Activated naive CD4-positive, alpha-beta T cell treated with anti-CD3 and anti-CD28 coated beads for 36 hours (primary cell): ENCODE measurements at regions of chr7 and their contacts with region 1.

Region 1: GRCh38 chr7:37916673-37917660 is at the start of gene SFRP4:
- DNase-seq: peak; percentile 17
- H3K4me3 Mint-ChIP-seq: peak within 1 kb of the TSS; percentile 22
- H3K27ac Mint-ChIP-seq: no peak within 1 kb of the TSS
- H3K4me1 Mint-ChIP-seq: peaks cover 14% of the 10 kb centered on the region
- H3K27me3 Mint-ChIP-seq: peaks cover 58% of the 10 kb centered on the region
- total RNA-seq, gene SFRP4: not detected

Region 2: DNA sequence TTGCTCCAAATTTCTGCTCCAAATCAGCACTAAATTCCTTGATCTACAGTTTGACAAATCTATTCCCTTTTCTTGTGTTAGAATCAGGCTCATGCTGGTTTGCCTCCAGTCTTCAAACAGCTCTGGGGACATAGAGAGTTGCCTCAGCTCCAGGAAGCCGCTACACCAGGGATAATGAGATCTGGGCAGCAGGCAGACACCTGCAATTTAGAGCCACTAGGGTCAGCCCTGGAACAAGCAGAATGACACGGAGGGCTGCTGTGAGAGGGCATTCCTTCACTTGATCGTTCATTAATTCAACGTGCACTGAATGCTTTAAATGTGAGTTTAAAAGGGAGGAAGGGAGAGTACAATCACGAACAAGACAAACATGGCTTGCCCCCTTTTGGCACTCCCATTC is 464.6 kb before region 1 on chr7:
- CTCF ChIA-PET with region 1: no interaction called
- intact Hi-C with region 1: no loop called
- DNase-seq: no peak
- H3K4me3 Mint-ChIP-seq: no peak overlapping the region
- H3K27ac Mint-ChIP-seq: no peak overlapping the region
- H3K4me1 Mint-ChIP-seq: peaks cover 14% of the 10 kb centered on the region
- H3K27me3 Mint-ChIP-seq: no peaks in the 10 kb centered on the region

Region 3: GRCh38 chr7:37999673-38000072 is 82.7 kb after region 1 on chr7:
- CTCF ChIA-PET with region 1: no interaction called
- intact Hi-C with region 1: loop called (anchors 10 kb)
- DNase-seq: no peak
- H3K4me3 Mint-ChIP-seq: no peak overlapping the region
- H3K27ac Mint-ChIP-seq: no peak overlapping the region
- H3K4me1 Mint-ChIP-seq: no peaks in the 10 kb centered on the region
- H3K27me3 Mint-ChIP-seq: peaks cover 8% of the 10 kb centered on the region